CD14-positive monocyte (primary cell): ENCODE measurements at regions of chr2 and their contacts with region 1.

Region 1: DNA sequence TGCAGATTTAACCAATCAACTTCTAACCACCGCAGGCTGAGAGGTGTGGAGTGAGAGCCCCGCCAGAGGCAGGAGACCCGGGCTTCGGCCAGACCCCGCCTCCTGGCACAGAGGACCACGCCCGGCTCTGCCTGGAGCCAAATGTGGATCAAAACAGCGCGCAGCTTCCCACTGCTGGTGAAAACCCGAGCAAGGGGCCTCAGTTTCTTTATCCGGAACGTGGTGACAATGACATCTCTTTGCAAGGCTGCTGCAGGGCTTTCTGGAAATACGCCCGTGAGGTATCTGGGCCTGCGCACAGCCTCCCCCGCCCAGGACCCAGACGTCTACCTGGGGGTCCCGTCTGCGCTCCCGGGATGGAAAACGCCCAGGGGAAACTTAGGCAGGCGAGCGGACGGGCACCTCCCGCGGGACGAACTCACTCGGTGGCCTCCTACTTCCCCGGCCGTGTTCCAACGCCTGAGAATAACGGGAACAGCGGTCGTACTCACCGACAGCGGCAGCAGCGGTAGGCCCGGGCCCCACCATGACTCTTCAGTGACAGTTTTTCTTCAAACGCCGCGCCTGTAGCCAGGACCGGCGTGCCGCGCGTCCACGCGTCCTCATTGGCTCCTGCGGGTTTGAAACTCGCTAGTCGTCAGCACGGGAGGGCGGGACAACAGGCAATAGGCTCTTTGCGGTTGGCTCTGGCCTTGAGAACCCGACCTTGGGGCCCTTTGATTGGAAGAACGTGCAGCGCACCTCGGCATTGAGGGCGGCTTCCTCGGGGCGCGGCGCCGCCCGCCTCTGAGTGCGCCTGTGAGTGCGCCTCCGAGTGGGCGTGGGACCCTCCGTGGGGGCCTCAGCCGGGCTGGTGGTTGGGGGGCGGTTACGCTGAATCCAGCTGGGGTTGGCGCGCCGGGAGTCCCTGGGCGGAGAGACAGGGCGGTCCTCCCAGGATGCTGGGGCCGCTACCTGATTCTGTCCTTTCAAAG is at the start of gene CKAP2L:
- DNase-seq: peak; percentile 94 to 97 (median 95)
- H3K4me3 ChIP-seq: peak within 1 kb of the TSS; percentile 58 to 90 (median 64)
- H3K4me3 Mint-ChIP-seq: peak within 1 kb of the TSS; percentile 89 to 93
- H3K27ac ChIP-seq: peak within 1 kb of the TSS in 1 of 2 donors; percentile 81
- H3K27ac Mint-ChIP-seq: peak within 1 kb of the TSS; percentile 74 to 95 (median 89)
- H3K4me1 ChIP-seq: peaks cover 36 to 50% of the 10 kb centered on the region in 2 donors
- H3K4me1 Mint-ChIP-seq: peaks cover 50% of the 10 kb centered on the region
- H3K27me3 ChIP-seq: no peaks in the 10 kb centered on the region
- H3K27me3 Mint-ChIP-seq: peaks cover 0 to 3% (median 0%) of the 10 kb centered on the region in 3 donors
- CTCF ChIP-seq: no peak
- polyA plus RNA-seq, gene CKAP2L: 0.04 to 0.24 TPM in 2 of 3 donors, not detected in the other

Region 2: GRCh38 chr2:112542123-112542983 is 222.0 kb before region 1 on chr2 and contains the start of gene POLR1B:
- intact Hi-C with region 1: no loop called
- DNase-seq: peak; percentile 70 to 71 (median 71)
- H3K4me3 ChIP-seq: peak within 1 kb of the TSS; percentile 60 to 95 (median 94)
- H3K4me3 Mint-ChIP-seq: no peak within 1 kb of the TSS
- H3K27ac ChIP-seq: peak within 1 kb of the TSS; percentile 93 to 95
- H3K27ac Mint-ChIP-seq: peak within 1 kb of the TSS in 1 of 7 donors; percentile 99
- H3K4me1 ChIP-seq: peaks cover 21 to 27% of the 10 kb centered on the region in 2 donors
- H3K4me1 Mint-ChIP-seq: peaks cover 13% of the 10 kb centered on the region
- H3K27me3 ChIP-seq: no peaks in the 10 kb centered on the region
- H3K27me3 Mint-ChIP-seq: peaks cover 0 to 4% (median 0%) of the 10 kb centered on the region in 3 donors
- CTCF ChIP-seq: no peak
- polyA plus RNA-seq, gene POLR1B: 5.2 to 6.3 (median 5.3) TPM

Region 3: DNA sequence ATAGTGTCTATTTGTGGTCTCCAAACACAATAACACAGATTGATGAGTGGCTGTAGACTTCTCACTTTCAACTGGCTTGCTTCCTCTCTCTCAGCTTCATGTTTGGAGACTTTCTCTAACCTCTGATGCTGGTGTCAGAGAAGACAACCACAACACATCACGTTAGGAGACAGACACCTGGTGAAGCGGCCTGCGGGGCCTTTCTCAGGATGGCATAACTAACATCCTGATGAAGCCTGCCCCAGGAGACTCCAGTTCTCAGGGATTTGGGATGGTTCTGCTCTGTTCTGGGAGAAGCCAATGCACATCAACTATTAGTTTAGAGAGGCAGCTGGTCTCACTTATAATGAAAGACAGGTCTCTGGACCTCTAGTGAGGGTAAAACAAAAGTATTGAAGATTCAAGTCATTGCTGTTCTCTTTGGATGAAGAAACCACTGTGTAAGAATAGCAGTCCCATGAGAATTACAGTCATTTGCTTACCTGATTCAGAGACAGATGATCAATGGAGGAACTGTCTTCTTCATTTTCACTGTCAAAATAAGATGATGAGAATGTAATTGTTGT is 18.0 kb after region 1 on chr2:
- intact Hi-C with region 1: loop called in 1 of 2 experiments (anchors 2 kb)
- DNase-seq: no peak
- H3K4me3 ChIP-seq: no peak overlapping the region
- H3K4me3 Mint-ChIP-seq: no peak overlapping the region
- H3K27ac ChIP-seq: no peak overlapping the region
- H3K27ac Mint-ChIP-seq: peak overlapping the region in 1 of 7 donors; percentile 66
- H3K4me1 ChIP-seq: peaks cover 26 to 43% of the 10 kb centered on the region in 2 donors
- H3K4me1 Mint-ChIP-seq: peaks cover 33% of the 10 kb centered on the region
- H3K27me3 ChIP-seq: no peaks in the 10 kb centered on the region
- H3K27me3 Mint-ChIP-seq: peaks cover 0 to 9% (median 4%) of the 10 kb centered on the region in 3 donors
- CTCF ChIP-seq: no peak

Region 4: GRCh38 chr2:112803691-112804521 is 39.5 kb after region 1 on chr2:
- intact Hi-C with region 1: loop called (anchors 5 kb)
- DNase-seq: peak in 1 of 3 donors; percentile 51
- H3K4me3 ChIP-seq: no peak overlapping the region
- H3K4me3 Mint-ChIP-seq: no peak overlapping the region
- H3K27ac ChIP-seq: no peak overlapping the region
- H3K27ac Mint-ChIP-seq: no peak overlapping the region
- H3K4me1 ChIP-seq: peaks cover 10 to 13% of the 10 kb centered on the region in 2 donors
- H3K4me1 Mint-ChIP-seq: peaks cover 12% of the 10 kb centered on the region
- H3K27me3 ChIP-seq: no peaks in the 10 kb centered on the region
- H3K27me3 Mint-ChIP-seq: peaks cover 0 to 4% (median 2%) of the 10 kb centered on the region in 3 donors
- CTCF ChIP-seq: no peak